K562 (cell line): ENCODE measurements at regions of chr1 and their contacts with region 1.

Region 1: DNA sequence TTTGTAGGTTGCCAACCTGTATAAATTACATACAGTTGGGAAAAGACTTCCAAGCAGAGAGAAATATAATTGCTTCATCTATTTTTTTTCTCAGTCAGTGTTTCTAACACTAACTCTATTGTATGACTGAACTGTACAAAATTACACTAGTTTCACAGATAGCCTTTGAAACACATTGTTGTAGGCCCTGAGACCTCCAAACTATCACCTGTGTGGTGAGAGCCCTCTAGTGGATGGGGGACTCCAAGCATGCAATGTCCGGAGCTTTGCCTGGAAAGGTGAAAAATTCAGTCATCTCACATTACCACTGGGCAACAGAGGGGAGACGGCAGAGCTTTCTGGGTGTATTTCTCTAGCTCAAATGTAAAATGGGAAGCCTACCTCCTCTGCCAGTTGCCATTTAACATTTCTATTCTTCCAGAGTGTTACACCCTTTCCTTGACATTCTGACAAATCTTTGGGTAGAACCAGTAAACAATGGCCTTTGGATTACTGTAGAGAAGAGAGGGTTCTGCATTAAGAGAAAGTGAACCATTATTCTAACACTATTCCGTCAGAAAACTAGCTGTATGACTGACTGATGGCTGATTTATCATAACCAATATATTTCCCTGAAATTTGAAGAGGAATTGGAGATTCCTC is 212.2 kb downstream of the LYPLAL1 start:
- DNase-seq: peak; percentile 55 to 67 (median 56)
- ATAC-seq: peak; percentile 99
- H3K4me3 ChIP-seq: no peak overlapping the region
- H3K27ac ChIP-seq: no peak overlapping the region
- H3K4me1 ChIP-seq: no peaks in the 10 kb centered on the region
- H3K27me3 ChIP-seq: no peaks in the 10 kb centered on the region
- CTCF ChIP-seq: peak; percentile 72 to 87 (median 80)
- EP300 ChIP-seq: no peak
- POLR2A ChIP-seq: no peak
- RAD21 ChIP-seq: peak; percentile 82 to 85

Region 2: DNA sequence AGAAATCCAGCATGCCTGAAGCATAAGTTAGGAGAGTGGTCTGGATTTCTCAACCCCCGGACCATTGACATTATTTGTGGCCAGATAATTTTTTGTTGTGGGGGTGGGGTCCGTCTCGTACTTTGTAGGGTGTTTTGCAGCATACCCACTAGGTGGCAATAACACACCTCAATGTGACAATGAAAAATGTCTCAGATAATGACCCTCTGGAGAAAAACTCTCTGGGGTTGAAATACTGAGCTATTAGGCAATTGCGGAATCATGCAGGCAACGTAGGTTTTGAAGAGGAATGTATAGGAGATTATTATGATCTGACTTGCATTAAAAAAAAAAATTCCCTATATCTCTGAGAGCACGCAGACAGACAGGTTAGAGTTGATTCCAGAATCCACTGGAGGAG is 1126.1 kb before region 1 on chr1:
- CTCF ChIA-PET with region 1: no interaction called
- POLR2A ChIA-PET with region 1: no interaction called
- in situ Hi-C with region 1: no loop called
- intact Hi-C with region 1: loop called (anchors 10 kb)
- DNase-seq: peak; percentile 33 to 69 (median 51)
- ATAC-seq: peak; percentile 96
- H3K4me3 ChIP-seq: no peak overlapping the region
- H3K27ac ChIP-seq: no peak overlapping the region
- H3K4me1 ChIP-seq: no peaks in the 10 kb centered on the region
- H3K27me3 ChIP-seq: peaks cover 0 to 3% of the 10 kb centered on the region in 2 experiments; a peak in 1 of 5 replicates
- CTCF ChIP-seq: peak; percentile 62 to 72 (median 68)
- EP300 ChIP-seq: no peak
- POLR2A ChIP-seq: no peak
- RAD21 ChIP-seq: peak; percentile 15 to 71; a peak in 3 of 4 replicates

Region 3: GRCh38 chr1:218557731-218558130 is 828.2 kb before region 1 on chr1:
- CTCF ChIA-PET with region 1: no interaction called
- POLR2A ChIA-PET with region 1: no interaction called
- in situ Hi-C with region 1: no loop called
- intact Hi-C with region 1: loop called (anchors 10 kb)
- DNase-seq: peak in 1 of 4 experiments; percentile 6
- ATAC-seq: no peak
- H3K4me3 ChIP-seq: no peak overlapping the region
- H3K27ac ChIP-seq: no peak overlapping the region
- H3K4me1 ChIP-seq: no peaks in the 10 kb centered on the region; a peak in 1 of 5 replicates
- H3K27me3 ChIP-seq: no peaks in the 10 kb centered on the region
- CTCF ChIP-seq: no peak
- EP300 ChIP-seq: no peak
- POLR2A ChIP-seq: no peak
- RAD21 ChIP-seq: no peak

Region 4: DNA sequence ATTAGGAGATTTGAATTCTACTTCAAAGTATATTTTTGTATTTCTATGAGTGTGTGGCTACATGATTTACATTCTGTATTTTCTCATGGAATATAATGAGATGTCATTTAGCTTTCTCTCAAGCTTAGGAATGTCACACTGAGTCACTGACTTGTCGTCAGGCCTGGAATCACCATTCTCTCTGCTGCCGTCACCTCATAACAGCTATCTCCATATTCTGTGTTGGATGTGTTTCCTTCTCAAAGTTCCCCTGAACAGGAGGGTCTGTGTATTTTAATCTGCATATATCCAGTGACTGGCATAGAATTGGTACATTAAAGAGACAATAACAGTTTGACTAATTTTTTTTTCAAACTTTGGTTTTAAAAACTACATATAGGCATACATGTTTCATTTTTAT is 176.3 kb before region 1 on chr1:
- CTCF ChIA-PET with region 1: no interaction called
- POLR2A ChIA-PET with region 1: no interaction called
- in situ Hi-C with region 1: no loop called
- intact Hi-C with region 1: loop called (anchors 10 kb)
- DNase-seq: no peak
- ATAC-seq: no peak
- H3K4me3 ChIP-seq: no peak overlapping the region
- H3K27ac ChIP-seq: no peak overlapping the region
- H3K4me1 ChIP-seq: no peaks in the 10 kb centered on the region
- H3K27me3 ChIP-seq: no peaks in the 10 kb centered on the region
- CTCF ChIP-seq: no peak
- EP300 ChIP-seq: no peak
- POLR2A ChIP-seq: no peak
- RAD21 ChIP-seq: no peak

Region 5: GRCh38 chr1:219220945-219221344 is 165.0 kb before region 1 on chr1:
- CTCF ChIA-PET with region 1: no interaction called
- POLR2A ChIA-PET with region 1: no interaction called
- in situ Hi-C with region 1: no loop called
- intact Hi-C with region 1: no loop called
- DNase-seq: peak in 1 of 4 experiments; percentile 19
- ATAC-seq: peak; percentile 75
- H3K4me3 ChIP-seq: no peak overlapping the region
- H3K27ac ChIP-seq: no peak overlapping the region
- H3K4me1 ChIP-seq: no peaks in the 10 kb centered on the region
- H3K27me3 ChIP-seq: no peaks in the 10 kb centered on the region
- CTCF ChIP-seq: peak in 1 of 3 experiments; percentile 20; a peak in 1 of 6 replicates
- EP300 ChIP-seq: no peak
- POLR2A ChIP-seq: no peak
- RAD21 ChIP-seq: peak in 1 of 2 experiments; percentile 32; a peak in 2 of 4 replicates

Region 6: DNA sequence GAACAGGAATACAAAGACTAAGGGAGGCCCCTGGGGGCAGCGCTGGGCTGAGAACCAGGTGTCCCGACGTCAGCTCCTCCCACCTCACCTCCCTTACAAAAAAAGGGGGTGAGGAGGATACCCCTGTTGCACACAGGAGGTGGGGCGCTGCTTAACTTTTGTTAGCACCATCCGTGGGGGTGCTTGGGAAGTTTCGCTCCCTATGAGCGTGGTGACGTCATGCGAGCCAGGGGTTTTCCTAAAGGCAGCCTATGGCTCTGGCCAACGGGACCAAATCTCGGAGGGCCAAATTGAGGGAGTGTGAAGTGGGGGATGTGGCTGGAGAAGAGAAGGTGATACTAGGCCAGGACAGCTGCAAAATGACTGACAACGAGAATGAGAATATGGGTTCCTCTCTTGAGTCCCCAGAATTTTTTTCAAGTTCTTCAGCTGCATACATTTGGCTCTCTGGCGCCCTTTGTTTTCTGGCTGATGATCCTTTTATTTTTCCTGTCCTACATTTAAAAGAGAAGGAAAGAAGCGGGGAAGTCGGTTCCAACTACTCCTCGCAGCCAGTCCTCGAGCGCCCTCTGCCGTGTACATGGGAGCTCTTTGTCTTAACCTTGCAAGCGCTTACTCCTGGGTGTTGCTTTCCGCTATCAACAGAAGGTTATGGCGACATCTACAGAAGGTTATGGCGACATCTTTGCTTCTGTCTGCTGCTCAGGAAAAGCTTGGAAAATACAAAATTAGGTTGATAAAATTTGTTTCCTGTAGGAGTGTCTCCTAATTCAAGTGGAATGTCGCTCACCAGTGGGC is 275.0 kb after region 1 on chr1:
- CTCF ChIA-PET with region 1: no interaction called
- POLR2A ChIA-PET with region 1: no interaction called
- in situ Hi-C with region 1: no loop called
- intact Hi-C with region 1: loop called (anchors 2 kb)
- DNase-seq: peak; percentile 76 to 91 (median 78)
- ATAC-seq: peak; percentile 98
- H3K4me3 ChIP-seq: no peak overlapping the region
- H3K27ac ChIP-seq: no peak overlapping the region
- H3K4me1 ChIP-seq: peaks cover 0 to 7% of the 10 kb centered on the region in 2 experiments; a peak in 4 of 5 replicates
- H3K27me3 ChIP-seq: no peaks in the 10 kb centered on the region
- CTCF ChIP-seq: peak; percentile 95 to 96 (median 95)
- EP300 ChIP-seq: no peak
- POLR2A ChIP-seq: no peak
- RAD21 ChIP-seq: peak; percentile 88 to 94